Activated T-helper 2 cell treated with anti-CD3 and anti-CD28 coated beads, Interferon-gamma antibody, Interleukin-2, Interleukin-4, amounts not matched to agents 10 μg/mL and 5 μg/mL and 100 μg/mL, durations not matched to agents 14 hours and 24 hours and 36 hours (primary cell): ENCODE measurements at regions of chr17 and their contacts with region 1.

Region 1: DNA sequence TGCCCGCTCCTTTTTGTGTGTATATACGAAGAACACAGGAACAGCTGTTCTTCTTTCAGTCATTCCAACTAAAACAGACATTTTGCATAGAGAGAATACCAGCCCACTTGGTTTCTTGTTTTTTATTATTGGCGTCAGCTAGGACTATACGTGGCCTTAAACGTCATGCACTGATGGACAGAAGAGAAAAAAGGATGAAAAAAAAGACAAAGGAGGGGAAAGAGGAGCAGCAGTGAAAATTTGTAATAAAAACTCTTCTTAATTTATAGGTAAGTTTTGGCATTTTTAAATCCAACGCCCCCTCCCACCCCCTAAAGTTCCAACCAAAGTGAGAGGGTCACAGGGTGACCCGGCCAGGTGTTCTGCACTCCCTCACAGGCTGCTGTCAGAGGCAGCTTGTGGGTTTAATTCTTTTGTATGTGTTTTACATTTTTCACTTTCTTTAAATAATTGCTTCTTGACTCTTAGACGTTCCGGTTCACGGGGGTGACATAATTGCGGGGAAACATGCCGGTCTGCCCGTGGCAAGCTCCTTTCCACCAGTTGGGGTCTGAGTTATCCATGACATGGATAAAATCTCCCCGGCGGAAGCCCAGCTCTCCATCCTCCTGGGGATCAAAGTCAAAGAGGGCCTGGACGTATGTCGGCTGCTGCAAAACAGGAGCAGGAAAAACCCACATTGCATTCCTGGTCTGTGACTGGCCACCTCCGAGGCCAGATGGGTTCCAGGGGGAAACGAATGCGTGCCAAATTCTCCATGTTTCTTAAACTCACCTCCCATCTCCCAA is 30.9 kb upstream of the SLC25A19 start:
- DNase-seq: no peak
- H3K4me3 Mint-ChIP-seq: no peak overlapping the region
- H3K27ac Mint-ChIP-seq: no peak overlapping the region
- H3K4me1 Mint-ChIP-seq: peaks cover 19% of the 10 kb centered on the region
- H3K27me3 Mint-ChIP-seq: no peaks in the 10 kb centered on the region

Region 2: GRCh38 chr17:75205037-75205792 is 114.9 kb before region 1 on chr17 and contains the start of gene NUP85:
- intact Hi-C with region 1: no loop called
- DNase-seq: peak; percentile 88
- H3K4me3 Mint-ChIP-seq: peak within 1 kb of the TSS; percentile 91
- H3K27ac Mint-ChIP-seq: peak within 1 kb of the TSS; percentile 96
- H3K4me1 Mint-ChIP-seq: peaks cover 11% of the 10 kb centered on the region
- H3K27me3 Mint-ChIP-seq: no peaks in the 10 kb centered on the region
- total RNA-seq, gene NUP85: 115 and 122 TPM in 2 replicates

Region 3: GRCh38 chr17:75412455-75413317 is 92.6 kb after region 1 on chr17:
- intact Hi-C with region 1: loop called (anchors 1 kb)
- DNase-seq: peak; percentile 73
- H3K4me3 Mint-ChIP-seq: peak overlapping the region; percentile 53
- H3K27ac Mint-ChIP-seq: no peak overlapping the region
- H3K4me1 Mint-ChIP-seq: peaks cover 26% of the 10 kb centered on the region
- H3K27me3 Mint-ChIP-seq: peaks cover 19% of the 10 kb centered on the region